ENCODE measurements at regions of chr1 and their contacts with region 1.

Region 1: GRCh38 chr1:153466908-153467307 is 6.5 kb upstream of the S100A7 start:
- DNase-seq: no peak
- ATAC-seq: no peak
- H3K4me3 ChIP-seq: no peak overlapping the region
- H3K27ac ChIP-seq: no peak overlapping the region
- H3K4me1 ChIP-seq: no peaks in the 10 kb centered on the region
- H3K27me3 ChIP-seq: no peaks in the 10 kb centered on the region
- CTCF ChIP-seq: no peak

Region 2: DNA sequence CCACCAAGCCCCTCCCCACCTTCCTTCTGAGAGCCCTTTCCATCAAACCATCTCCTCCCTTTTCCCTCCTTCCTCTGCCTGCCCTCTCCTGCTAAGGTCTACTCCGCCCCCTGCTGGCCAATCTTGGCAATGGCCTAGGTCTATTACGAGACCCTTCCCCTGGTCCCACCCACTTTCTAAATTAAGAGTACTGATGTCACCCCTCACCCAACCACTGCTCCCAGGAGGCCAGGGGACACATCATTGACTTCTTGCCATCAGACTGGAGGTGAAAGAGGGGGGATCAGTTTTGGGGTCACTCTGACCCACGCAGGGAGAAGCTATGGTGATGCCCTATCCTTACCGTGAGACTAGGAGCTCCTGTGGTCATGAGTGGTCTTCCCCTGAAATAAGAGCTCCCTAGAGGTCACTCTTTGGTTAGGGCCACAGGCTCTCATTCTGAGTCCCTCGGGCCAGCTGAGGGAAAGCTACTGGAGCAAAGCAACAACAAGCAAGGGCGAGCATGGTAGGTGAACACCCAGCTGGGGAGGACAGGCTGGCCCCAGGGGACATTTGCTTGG is 28.1 kb after region 1 on chr1:
- intact Hi-C with region 1: loop called in 1 of 2 experiments (anchors 1 kb)
- DNase-seq: peak; percentile 80 to 89
- ATAC-seq: peak; percentile 55 to 64 (median 60)
- H3K4me3 ChIP-seq: no peak overlapping the region
- H3K27ac ChIP-seq: no peak overlapping the region
- H3K4me1 ChIP-seq: peaks cover 1% of the 10 kb centered on the region
- H3K27me3 ChIP-seq: peaks cover 0 to 3% (median 0%) of the 10 kb centered on the region in 3 donors
- CTCF ChIP-seq: peak; percentile 96

Region 3: DNA sequence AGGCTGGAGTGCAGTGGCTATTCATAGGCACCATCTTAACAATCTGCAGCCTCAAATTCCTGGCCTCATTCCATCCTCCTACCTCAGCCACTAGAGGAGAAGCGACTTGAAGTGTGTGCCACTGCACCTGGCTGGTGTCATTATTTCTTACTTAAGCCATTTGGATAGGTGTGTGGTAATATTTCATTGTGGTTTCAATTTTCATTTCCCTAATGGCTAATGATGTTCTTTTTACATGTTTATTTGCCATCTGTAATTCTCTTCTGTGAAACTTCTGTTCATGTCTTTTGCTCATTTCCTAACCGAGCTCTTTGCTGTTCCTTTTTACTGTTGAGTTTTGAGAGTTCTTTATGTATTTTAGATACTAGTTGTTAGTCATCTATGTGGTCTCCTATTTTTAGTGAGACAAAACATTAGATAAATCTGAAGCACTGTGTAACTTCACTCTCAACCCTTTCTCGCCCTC is 375.1 kb after region 1 on chr1:
- intact Hi-C with region 1: no loop called
- DNase-seq: no peak
- ATAC-seq: peak; percentile 49 to 72 (median 62)
- H3K4me3 ChIP-seq: no peak overlapping the region
- H3K27ac ChIP-seq: no peak overlapping the region
- H3K4me1 ChIP-seq: peaks cover 13% of the 10 kb centered on the region
- H3K27me3 ChIP-seq: no peaks in the 10 kb centered on the region
- CTCF ChIP-seq: no peak